Posterior vena cava (tissue), 2 donors: ENCODE measurements at regions of chr16 and their contacts with region 1.

Region 1: GRCh38 chr16:64151990-64152767 is 969.7 kb downstream of the CDH11 start:
- DNase-seq: no peak

Region 2: DNA sequence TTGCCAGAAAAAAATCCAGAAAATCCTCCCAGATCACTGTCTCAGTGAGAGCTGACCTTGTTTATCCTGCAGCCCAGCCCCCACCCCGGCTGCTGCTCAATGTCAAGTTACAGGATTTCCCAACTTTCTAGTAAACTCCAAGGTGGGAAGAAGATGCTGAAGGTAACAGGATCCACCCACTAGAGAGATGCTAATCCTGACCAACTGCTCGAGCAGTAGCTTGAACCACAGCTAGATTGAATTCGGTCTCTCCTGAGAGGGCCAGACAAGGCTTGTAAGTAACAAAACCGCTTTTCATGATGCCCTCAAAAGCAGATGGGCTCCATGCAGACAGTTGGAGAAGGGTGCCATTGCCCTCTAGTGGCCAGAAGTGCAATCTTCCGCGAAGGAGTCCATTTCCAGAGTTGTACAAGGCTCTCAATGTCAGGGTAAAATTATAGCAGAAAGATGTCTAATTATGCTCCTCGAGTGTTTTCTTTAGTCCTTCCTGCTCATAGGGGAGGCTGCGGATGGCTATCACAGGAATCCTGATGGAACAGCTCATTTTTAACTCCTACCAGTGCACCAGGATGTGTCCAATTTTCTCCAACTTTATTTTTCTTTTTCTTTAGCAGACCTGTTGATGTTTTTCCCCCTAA is 965.8 kb after region 1 on chr16:
- intact Hi-C with region 1: loop called in 1 of 2 experiments (anchors 5 kb)
- DNase-seq: peak; percentile 81